H1 (cell line): ENCODE measurements at regions of chr7 and their contacts with region 1.

Region 1: GRCh38 chr7:108114117-108114841 is 15.9 kb downstream of the LAMB4 start:
- DNase-seq: peak; percentile 33 to 50
- H3K4me3 ChIP-seq: no peak overlapping the region
- H3K27ac ChIP-seq: no peak overlapping the region
- H3K4me1 ChIP-seq: no peaks in the 10 kb centered on the region
- H3K27me3 ChIP-seq: no peaks in the 10 kb centered on the region
- CTCF ChIP-seq: peak; percentile 61 to 86 (median 84)
- EP300 ChIP-seq: no peak
- POLR2A ChIP-seq: no peak
- RAD21 ChIP-seq: peak; percentile 85 to 91

Region 2: GRCh38 chr7:108097703-108098102 is 16.6 kb before region 1 on chr7:
- CTCF ChIA-PET with region 1: interaction called, 21 read pairs
- POLR2A ChIA-PET with region 1: interaction called, 4 read pairs
- DNase-seq: no peak
- H3K4me3 ChIP-seq: no peak overlapping the region
- H3K27ac ChIP-seq: no peak overlapping the region
- H3K4me1 ChIP-seq: peaks cover 0 to 6% (median 0%) of the 10 kb centered on the region in 4 experiments; a peak in 1 of 7 replicates
- H3K27me3 ChIP-seq: no peaks in the 10 kb centered on the region
- CTCF ChIP-seq: peak in 2 of 3 experiments; percentile 15 to 21; a peak in 2 of 4 replicates
- EP300 ChIP-seq: no peak
- POLR2A ChIP-seq: no peak
- RAD21 ChIP-seq: peak in 1 of 2 experiments; percentile 11; a peak in 2 of 4 replicates

Region 3: DNA sequence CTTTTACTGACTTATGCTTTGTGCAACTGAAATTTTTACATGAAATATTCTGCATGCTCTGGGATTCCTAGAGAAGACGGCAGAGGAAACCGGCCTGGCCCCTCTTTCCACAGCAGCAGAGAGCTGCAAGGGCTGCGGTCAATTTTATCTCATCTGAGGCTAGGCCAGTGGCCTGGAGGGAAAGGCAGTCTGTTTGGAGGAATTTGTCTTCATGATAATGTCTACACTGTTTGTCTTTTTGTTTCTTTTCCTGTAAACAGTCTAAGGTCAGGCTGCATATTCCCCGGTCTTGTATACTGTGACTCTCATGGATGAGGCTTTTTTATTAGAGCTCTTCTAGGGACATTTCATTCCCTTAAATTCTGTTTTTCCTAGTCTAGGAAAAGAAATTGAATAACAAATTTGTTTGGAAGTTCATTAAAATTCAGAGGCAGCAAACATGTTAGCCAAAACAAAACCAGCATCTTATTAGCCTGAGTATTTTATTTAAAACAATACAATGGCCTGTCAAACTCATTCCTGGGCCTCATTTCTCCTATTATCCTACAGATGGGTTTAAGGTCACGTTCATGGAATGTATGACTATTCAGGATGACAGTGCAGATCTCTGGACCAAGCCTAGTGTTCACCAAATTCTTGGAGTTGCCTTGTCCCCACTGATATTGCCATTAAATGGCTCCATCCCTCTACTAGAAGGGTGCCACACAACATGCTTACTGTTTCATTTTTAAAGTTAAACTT is 10.6 kb before region 1 on chr7:
- CTCF ChIA-PET with region 1: interaction called, 21 read pairs
- POLR2A ChIA-PET with region 1: no interaction called
- DNase-seq: no peak
- H3K4me3 ChIP-seq: no peak overlapping the region
- H3K27ac ChIP-seq: no peak overlapping the region
- H3K4me1 ChIP-seq: no peaks in the 10 kb centered on the region
- H3K27me3 ChIP-seq: no peaks in the 10 kb centered on the region
- CTCF ChIP-seq: no peak
- EP300 ChIP-seq: no peak
- POLR2A ChIP-seq: no peak
- RAD21 ChIP-seq: no peak

Region 4: GRCh38 chr7:108129018-108129965 is 15.0 kb after region 1 on chr7:
- CTCF ChIA-PET with region 1: interaction called, 12 read pairs
- POLR2A ChIA-PET with region 1: no interaction called
- DNase-seq: no peak
- H3K4me3 ChIP-seq: no peak overlapping the region
- H3K27ac ChIP-seq: no peak overlapping the region
- H3K4me1 ChIP-seq: peaks cover 0 to 6% (median 1%) of the 10 kb centered on the region in 4 experiments; a peak in 1 of 7 replicates
- H3K27me3 ChIP-seq: no peaks in the 10 kb centered on the region
- CTCF ChIP-seq: no peak
- EP300 ChIP-seq: no peak
- POLR2A ChIP-seq: no peak
- RAD21 ChIP-seq: no peak

Region 5: GRCh38 chr7:108135446-108136190 is 21.3 kb after region 1 on chr7:
- CTCF ChIA-PET with region 1: interaction called, 16 read pairs
- POLR2A ChIA-PET with region 1: no interaction called
- DNase-seq: no peak
- H3K4me3 ChIP-seq: no peak overlapping the region
- H3K27ac ChIP-seq: no peak overlapping the region
- H3K4me1 ChIP-seq: peaks cover 0 to 6% (median 1%) of the 10 kb centered on the region in 4 experiments; a peak in 1 of 7 replicates
- H3K27me3 ChIP-seq: no peaks in the 10 kb centered on the region
- CTCF ChIP-seq: no peak
- EP300 ChIP-seq: no peak
- POLR2A ChIP-seq: no peak
- RAD21 ChIP-seq: no peak

Region 6: GRCh38 chr7:108146070-108146837 is 32.0 kb after region 1 on chr7:
- CTCF ChIA-PET with region 1: interaction called, 61 read pairs
- POLR2A ChIA-PET with region 1: no interaction called
- DNase-seq: peak; percentile 39 to 77
- H3K4me3 ChIP-seq: peak overlapping the region; percentile 41 to 81 (median 76); a peak in 7 of 8 replicates
- H3K27ac ChIP-seq: no peak overlapping the region
- H3K4me1 ChIP-seq: peaks cover 0 to 5% (median 0%) of the 10 kb centered on the region in 4 experiments; a peak in 3 of 7 replicates
- H3K27me3 ChIP-seq: no peaks in the 10 kb centered on the region
- CTCF ChIP-seq: peak; percentile 26 to 85 (median 80)
- EP300 ChIP-seq: no peak
- POLR2A ChIP-seq: no peak
- RAD21 ChIP-seq: peak; percentile 92 to 93